ENCODE measurements at regions of chr4 and their contacts with region 1.

Region 1: GRCh38 chr4:114752391-114753165 is 154.0 kb downstream of the UGT8 start:
- DNase-seq: no peak
- ATAC-seq: no peak
- H3K4me3 ChIP-seq: no peak overlapping the region
- H3K4me3 Mint-ChIP-seq: no peak overlapping the region
- H3K27ac ChIP-seq: no peak overlapping the region
- H3K27ac Mint-ChIP-seq: no peak overlapping the region
- H3K4me1 ChIP-seq: no peaks in the 10 kb centered on the region
- H3K4me1 Mint-ChIP-seq: no peaks in the 10 kb centered on the region
- H3K27me3 ChIP-seq: no peaks in the 10 kb centered on the region
- H3K27me3 Mint-ChIP-seq: peaks cover 0 to 17% (median 10%) of the 10 kb centered on the region in 5 donors

Region 2: DNA sequence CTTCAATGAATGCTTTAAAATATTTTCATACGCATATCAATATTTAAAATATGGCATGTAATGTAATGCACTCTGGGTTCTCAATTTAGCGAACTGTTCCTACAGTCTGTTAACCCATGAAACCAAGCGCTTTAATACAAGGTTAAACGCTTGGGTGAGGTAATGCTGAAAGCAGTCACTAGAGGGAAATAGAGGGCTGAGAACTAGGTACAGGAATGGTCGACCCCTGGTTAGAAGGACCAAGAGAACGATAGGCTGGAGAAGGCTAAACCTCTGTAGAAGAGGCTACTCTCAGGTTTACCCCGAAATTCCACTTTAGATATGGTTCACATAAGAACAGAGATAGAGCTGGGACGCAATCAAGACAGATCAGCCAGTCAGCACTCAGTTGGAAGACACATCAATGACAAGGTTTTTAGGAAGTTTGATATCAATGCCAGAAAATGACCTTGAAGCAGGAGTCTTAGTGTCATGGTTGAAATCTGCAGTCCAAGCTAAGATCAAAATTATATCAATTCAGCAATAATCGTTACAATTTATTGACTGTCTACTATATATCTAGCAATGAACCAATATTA is 800.0 kb before region 1 on chr4:
- CTCF ChIA-PET with region 1: no interaction called
- POLR2A ChIA-PET with region 1: no interaction called
- intact Hi-C with region 1: no loop called
- DNase-seq: peak in 5 of 9 donors; percentile 8 to 33 (median 21)
- ATAC-seq: peak; percentile 81
- H3K4me3 ChIP-seq: no peak overlapping the region
- H3K4me3 Mint-ChIP-seq: peak overlapping the region in 1 of 10 donors; percentile 13
- H3K27ac ChIP-seq: no peak overlapping the region
- H3K27ac Mint-ChIP-seq: no peak overlapping the region
- H3K4me1 ChIP-seq: no peaks in the 10 kb centered on the region
- H3K4me1 Mint-ChIP-seq: peaks cover 0 to 30% (median 20%) of the 10 kb centered on the region in 7 donors
- H3K27me3 ChIP-seq: no peaks in the 10 kb centered on the region
- H3K27me3 Mint-ChIP-seq: peaks cover 0 to 19% (median 5%) of the 10 kb centered on the region in 5 donors

Region 3: GRCh38 chr4:114688059-114688458 is 64.5 kb before region 1 on chr4:
- CTCF ChIA-PET with region 1: no interaction called
- POLR2A ChIA-PET with region 1: no interaction called
- intact Hi-C with region 1: loop called in 1 of 2 experiments (anchors 10 kb)
- DNase-seq: no peak
- ATAC-seq: no peak
- H3K4me3 ChIP-seq: no peak overlapping the region
- H3K4me3 Mint-ChIP-seq: no peak overlapping the region
- H3K27ac ChIP-seq: no peak overlapping the region
- H3K27ac Mint-ChIP-seq: no peak overlapping the region
- H3K4me1 ChIP-seq: no peaks in the 10 kb centered on the region
- H3K4me1 Mint-ChIP-seq: peaks cover 0 to 6% (median 0%) of the 10 kb centered on the region in 7 donors
- H3K27me3 ChIP-seq: no peaks in the 10 kb centered on the region
- H3K27me3 Mint-ChIP-seq: peaks cover 7 to 23% (median 15%) of the 10 kb centered on the region in 5 donors

Region 4: GRCh38 chr4:114773341-114773740 is 20.8 kb after region 1 on chr4:
- CTCF ChIA-PET with region 1: no interaction called
- POLR2A ChIA-PET with region 1: no interaction called
- intact Hi-C with region 1: no loop called
- DNase-seq: no peak
- ATAC-seq: no peak
- H3K4me3 ChIP-seq: no peak overlapping the region
- H3K4me3 Mint-ChIP-seq: no peak overlapping the region
- H3K27ac ChIP-seq: no peak overlapping the region
- H3K27ac Mint-ChIP-seq: no peak overlapping the region
- H3K4me1 ChIP-seq: no peaks in the 10 kb centered on the region
- H3K4me1 Mint-ChIP-seq: no peaks in the 10 kb centered on the region
- H3K27me3 ChIP-seq: no peaks in the 10 kb centered on the region
- H3K27me3 Mint-ChIP-seq: no peaks in the 10 kb centered on the region

Measured in naive thymus-derived CD4-positive, alpha-beta T cell (primary cell).